Upper lobe of right lung (tissue), 1 donor: ENCODE measurements at regions of chr21 and their contacts with region 1.

Region 1: DNA sequence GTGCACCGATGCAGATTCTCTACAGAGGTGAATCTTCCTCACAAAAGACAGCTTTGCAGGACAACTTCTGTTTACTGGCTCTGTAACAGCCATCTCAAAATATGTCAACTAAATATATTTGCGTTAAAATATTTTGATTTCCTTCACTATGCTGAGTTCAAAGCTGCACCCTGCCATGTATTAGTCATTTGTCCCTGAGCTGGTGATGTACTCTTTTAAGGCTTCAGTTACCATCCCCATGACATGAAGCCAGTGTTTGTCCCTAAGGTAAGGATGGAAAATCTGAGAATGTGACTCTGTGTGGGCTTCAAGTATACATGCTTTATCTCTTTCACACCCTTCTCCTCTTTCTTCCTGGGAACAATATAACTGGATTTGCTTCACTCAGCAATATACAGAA is 70.2 kb upstream of the BTG3 start:
- DNase-seq: no peak
- ATAC-seq: no peak
- H3K4me3 ChIP-seq: no peak overlapping the region
- H3K27ac ChIP-seq: no peak overlapping the region
- H3K4me1 ChIP-seq: no peaks in the 10 kb centered on the region
- H3K27me3 ChIP-seq: no peaks in the 10 kb centered on the region
- CTCF ChIP-seq: no peak

Region 2: DNA sequence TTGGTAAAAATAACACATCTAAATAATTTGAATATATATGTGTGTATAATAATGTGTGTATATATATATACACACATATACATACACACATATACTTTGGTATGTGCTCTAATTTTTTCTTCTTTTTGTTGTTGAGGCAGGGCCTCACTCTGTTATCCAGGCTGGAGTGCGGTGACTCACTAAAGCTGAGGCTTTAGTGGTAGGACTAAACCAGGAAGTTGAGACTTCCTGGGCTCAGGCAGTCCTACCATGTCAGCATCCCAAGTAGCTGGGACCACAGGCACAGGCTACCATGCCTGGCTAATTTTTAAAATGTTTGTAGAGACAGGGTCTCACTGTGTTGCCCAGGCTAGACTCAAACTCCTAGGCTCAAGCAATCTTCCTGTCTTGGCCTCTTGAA is 216.8 kb before region 1 on chr21:
- intact Hi-C with region 1: no loop called
- DNase-seq: no peak
- ATAC-seq: peak; percentile 73
- H3K4me3 ChIP-seq: no peak overlapping the region
- H3K27ac ChIP-seq: no peak overlapping the region
- H3K4me1 ChIP-seq: no peaks in the 10 kb centered on the region
- H3K27me3 ChIP-seq: no peaks in the 10 kb centered on the region
- CTCF ChIP-seq: no peak

Region 3: GRCh38 chr21:17903029-17903806 is 220.3 kb after region 1 on chr21:
- intact Hi-C with region 1: loop called (anchors 5 kb)
- DNase-seq: no peak
- ATAC-seq: peak; percentile 60
- H3K4me3 ChIP-seq: no peak overlapping the region
- H3K27ac ChIP-seq: no peak overlapping the region
- H3K4me1 ChIP-seq: no peaks in the 10 kb centered on the region
- H3K27me3 ChIP-seq: no peaks in the 10 kb centered on the region
- CTCF ChIP-seq: peak; percentile 43